ENCODE measurements at regions of chr10 and their contacts with region 1.

Region 1: GRCh38 chr10:69318106-69318866 is 40.0 kb downstream of the HK1 start:
- DNase-seq: peak; percentile 79 to 95 (median 89)
- ATAC-seq: peak; percentile 91 to 94 (median 92)
- H3K4me3 ChIP-seq: peak overlapping the region; percentile 96 to 99
- H3K4me3 Mint-ChIP-seq: peak overlapping the region; percentile 95 to 98 (median 97)
- H3K27ac ChIP-seq: peak overlapping the region; percentile 90
- H3K27ac Mint-ChIP-seq: peak overlapping the region; percentile 83 to 85
- H3K4me1 ChIP-seq: peaks cover 11 to 37% of the 10 kb centered on the region in 2 experiments
- H3K4me1 Mint-ChIP-seq: peaks cover 37 to 43% (median 42%) of the 10 kb centered on the region in 3 donors
- H3K27me3 ChIP-seq: peaks cover 0 to 3% of the 10 kb centered on the region in 2 experiments
- H3K27me3 Mint-ChIP-seq: no peaks in the 10 kb centered on the region

Region 2: GRCh38 chr10:68419376-68419775 is 898.9 kb before region 1 on chr10:
- CTCF ChIA-PET with region 1: interaction called in 1 of 2 experiments, 13 read pairs
- POLR2A ChIA-PET with region 1: no interaction called
- DNase-seq: no peak
- ATAC-seq: no peak
- H3K4me3 ChIP-seq: no peak overlapping the region
- H3K4me3 Mint-ChIP-seq: no peak overlapping the region
- H3K27ac ChIP-seq: no peak overlapping the region
- H3K27ac Mint-ChIP-seq: no peak overlapping the region
- H3K4me1 ChIP-seq: peaks cover 7 to 10% of the 10 kb centered on the region in 2 experiments
- H3K4me1 Mint-ChIP-seq: peaks cover 11 to 16% (median 14%) of the 10 kb centered on the region in 3 donors
- H3K27me3 ChIP-seq: no peaks in the 10 kb centered on the region
- H3K27me3 Mint-ChIP-seq: no peaks in the 10 kb centered on the region

Region 3: GRCh38 chr10:69527961-69528360 is 209.7 kb after region 1 on chr10:
- CTCF ChIA-PET with region 1: no interaction called
- POLR2A ChIA-PET with region 1: no interaction called
- DNase-seq: no peak
- ATAC-seq: no peak
- H3K4me3 ChIP-seq: no peak overlapping the region
- H3K4me3 Mint-ChIP-seq: no peak overlapping the region
- H3K27ac ChIP-seq: no peak overlapping the region
- H3K27ac Mint-ChIP-seq: no peak overlapping the region
- H3K4me1 ChIP-seq: no peaks in the 10 kb centered on the region
- H3K4me1 Mint-ChIP-seq: no peaks in the 10 kb centered on the region
- H3K27me3 ChIP-seq: peaks cover 0 to 5% of the 10 kb centered on the region in 2 experiments
- H3K27me3 Mint-ChIP-seq: peaks cover 5 to 19% of the 10 kb centered on the region in 2 donors